Caco-2 (cell line): ENCODE measurements at regions of chr14 and their contacts with region 1.

Region 1: GRCh38 chr14:99779751-99780150 is 13.5 kb upstream of the EML1 start:
- DNase-seq: no peak
- H3K4me3 ChIP-seq: no peak overlapping the region
- H3K4me3 Mint-ChIP-seq: no peak overlapping the region
- H3K27ac Mint-ChIP-seq: no peak overlapping the region
- H3K4me1 ChIP-seq: peaks cover 11% of the 10 kb centered on the region
- H3K4me1 Mint-ChIP-seq: peaks cover 12% of the 10 kb centered on the region
- H3K27me3 ChIP-seq: no peaks in the 10 kb centered on the region
- H3K27me3 Mint-ChIP-seq: peaks cover 17% of the 10 kb centered on the region
- CTCF ChIP-seq: no peak

Region 2: GRCh38 chr14:99793213-99794150 is 13.7 kb after region 1 on chr14 and contains the start of gene EML1:
- CTCF ChIA-PET with region 1: interaction called, 6 read pairs
- POLR2A ChIA-PET with region 1: interaction called, 5 read pairs
- intact Hi-C with region 1: loop called (anchors 1 kb)
- DNase-seq: peak; percentile 75 to 91
- H3K4me3 ChIP-seq: peak within 1 kb of the TSS; percentile 44
- H3K4me3 Mint-ChIP-seq: peak within 1 kb of the TSS; percentile 64
- H3K27ac Mint-ChIP-seq: peak within 1 kb of the TSS; percentile 57
- H3K4me1 ChIP-seq: no peaks in the 10 kb centered on the region
- H3K4me1 Mint-ChIP-seq: peaks cover 14% of the 10 kb centered on the region
- H3K27me3 ChIP-seq: no peaks in the 10 kb centered on the region
- H3K27me3 Mint-ChIP-seq: no peaks in the 10 kb centered on the region
- CTCF ChIP-seq: no peak
- total RNA-seq, gene EML1: 5.9 and 7.2 TPM in 2 replicates

Region 3: DNA sequence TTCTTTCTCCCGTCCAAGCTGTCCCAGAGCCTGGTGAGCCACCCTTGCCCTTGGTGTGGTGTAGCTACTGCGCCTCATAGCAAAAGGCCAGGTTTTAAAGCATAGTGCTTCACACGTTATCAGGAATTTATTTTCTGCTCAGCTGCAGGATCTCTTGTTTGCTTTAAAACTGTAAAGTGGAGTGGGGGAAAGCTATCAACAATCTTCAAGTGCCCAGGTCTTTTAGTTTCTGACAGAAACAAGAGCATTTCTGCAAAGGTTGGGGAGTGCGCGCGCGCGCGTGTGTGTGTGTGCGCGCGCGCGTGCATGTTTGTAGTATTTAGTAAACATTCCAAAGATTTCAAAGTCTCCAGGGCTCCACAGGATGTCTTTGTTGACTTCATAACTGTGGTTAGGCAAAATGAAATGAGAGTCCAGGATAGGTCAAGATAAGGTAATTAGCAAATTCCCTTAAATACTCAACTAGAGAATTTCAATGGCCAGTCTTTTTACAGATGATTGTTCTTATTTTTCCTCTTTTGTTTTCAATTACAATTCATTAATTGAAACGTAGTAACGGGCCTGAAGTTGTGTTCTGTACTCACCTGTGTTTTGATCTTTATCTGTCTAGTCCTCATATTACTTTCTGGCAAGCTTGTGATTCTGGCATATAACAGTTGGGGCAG is 59.0 kb after region 1 on chr14:
- CTCF ChIA-PET with region 1: no interaction called
- POLR2A ChIA-PET with region 1: no interaction called
- intact Hi-C with region 1: loop called (anchors 5 kb)
- DNase-seq: peak in 1 of 2 experiments; percentile 54
- H3K4me3 ChIP-seq: 0 out of 2 replicates have a peak overlapping the region, but pooled peaks have one; percentile 5
- H3K4me3 Mint-ChIP-seq: peak overlapping the region; percentile 66
- H3K27ac Mint-ChIP-seq: peak overlapping the region; percentile 19
- H3K4me1 ChIP-seq: peaks cover 7% of the 10 kb centered on the region; the same call in 1 of the 2 replicates
- H3K4me1 Mint-ChIP-seq: peaks cover 14% of the 10 kb centered on the region
- H3K27me3 ChIP-seq: no peaks in the 10 kb centered on the region
- H3K27me3 Mint-ChIP-seq: peaks cover 10% of the 10 kb centered on the region
- CTCF ChIP-seq: no peak